Ovary (tissue), 10 donors: ENCODE measurements at regions of chr1 and their contacts with region 1.

Region 1: GRCh38 chr1:183471743-183472487 is 384 bp upstream of the SMG7 start:
- DNase-seq: peak; percentile 98 to 99 (median 98)
- H3K4me3 ChIP-seq: peak overlapping the region; percentile 96
- H3K27ac ChIP-seq: peak overlapping the region; percentile 88 to 90
- H3K4me1 ChIP-seq: peaks cover 4% of the 10 kb centered on the region
- H3K27me3 ChIP-seq: no peaks in the 10 kb centered on the region
- CTCF ChIP-seq: peak in 2 of 3 donors; percentile 11 to 45
- EP300 ChIP-seq: no peak
- POLR2A ChIP-seq: peak; percentile 55

Region 2: DNA sequence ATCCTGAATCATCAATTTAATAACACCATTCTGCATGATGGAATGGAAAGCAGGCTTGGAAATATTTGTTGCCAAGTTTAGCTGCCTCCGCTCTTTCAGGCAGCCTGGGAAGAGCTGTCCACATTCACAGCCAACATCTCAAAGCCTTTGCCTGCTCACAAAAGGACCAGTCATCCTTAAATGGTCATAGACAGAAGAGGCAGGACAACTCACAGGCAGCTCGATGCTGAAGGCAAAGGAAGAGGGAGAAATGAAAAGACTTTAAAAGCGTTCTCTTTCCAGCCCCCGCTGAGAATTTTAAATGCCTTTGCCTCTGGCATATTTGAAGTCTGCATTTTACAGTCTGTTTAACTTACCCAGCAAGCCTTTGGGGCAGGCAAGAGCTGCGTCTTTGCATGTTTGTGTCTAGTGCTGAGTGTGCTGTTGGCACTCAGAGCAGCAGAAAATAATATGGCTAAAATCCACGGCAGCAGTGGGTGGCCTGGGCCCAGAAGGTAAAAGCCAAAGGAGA is 122.7 kb before region 1 on chr1:
- intact Hi-C with region 1: no loop called
- DNase-seq: no peak
- H3K4me3 ChIP-seq: no peak overlapping the region
- H3K27ac ChIP-seq: no peak overlapping the region
- H3K4me1 ChIP-seq: peaks cover 2% of the 10 kb centered on the region
- H3K27me3 ChIP-seq: no peaks in the 10 kb centered on the region
- CTCF ChIP-seq: no peak
- EP300 ChIP-seq: no peak
- POLR2A ChIP-seq: no peak

Region 3: DNA sequence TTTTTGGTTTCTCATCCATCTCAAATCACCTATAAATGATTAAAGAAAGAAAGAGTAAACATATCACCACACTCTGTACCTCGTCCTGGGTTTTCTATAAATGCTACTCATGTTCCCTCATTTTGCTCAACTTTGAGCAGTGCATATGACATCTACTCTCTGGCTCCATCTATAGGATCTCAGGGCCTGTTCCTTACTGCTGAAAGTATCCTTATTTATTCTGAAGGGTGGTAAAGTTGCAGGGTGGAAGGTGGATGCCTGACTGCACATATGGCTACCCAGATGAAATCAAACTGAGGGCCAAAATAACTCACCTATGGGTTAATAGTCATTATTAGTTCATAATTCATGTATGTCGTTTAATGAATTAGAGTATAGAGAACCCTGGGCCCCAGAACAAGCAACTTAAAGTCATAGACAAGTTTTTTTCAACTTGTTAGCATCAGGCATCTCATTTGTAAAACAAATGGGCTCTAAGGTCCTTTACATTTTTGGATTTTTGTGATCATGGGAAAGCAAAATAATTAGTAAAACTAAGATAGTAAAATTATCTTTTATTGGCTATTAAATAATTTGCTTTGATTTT is 71.8 kb after region 1 on chr1:
- intact Hi-C with region 1: loop called in 1 of 4 experiments (anchors 10 kb)
- DNase-seq: no peak
- H3K4me3 ChIP-seq: no peak overlapping the region
- H3K27ac ChIP-seq: no peak overlapping the region
- H3K4me1 ChIP-seq: no peaks in the 10 kb centered on the region
- H3K27me3 ChIP-seq: no peaks in the 10 kb centered on the region
- CTCF ChIP-seq: peak in 1 of 3 donors; percentile 21
- EP300 ChIP-seq: no peak
- POLR2A ChIP-seq: no peak

Region 4: GRCh38 chr1:183622884-183623785 is 151.2 kb after region 1 on chr1:
- intact Hi-C with region 1: loop called in 2 of 4 experiments (anchors 10 kb)
- DNase-seq: peak; percentile 37 to 66 (median 54)
- H3K4me3 ChIP-seq: no peak overlapping the region
- H3K27ac ChIP-seq: no peak overlapping the region
- H3K4me1 ChIP-seq: peaks cover 3% of the 10 kb centered on the region
- H3K27me3 ChIP-seq: no peaks in the 10 kb centered on the region
- CTCF ChIP-seq: peak; percentile 36 to 64 (median 50)
- EP300 ChIP-seq: no peak
- POLR2A ChIP-seq: no peak

Region 5: DNA sequence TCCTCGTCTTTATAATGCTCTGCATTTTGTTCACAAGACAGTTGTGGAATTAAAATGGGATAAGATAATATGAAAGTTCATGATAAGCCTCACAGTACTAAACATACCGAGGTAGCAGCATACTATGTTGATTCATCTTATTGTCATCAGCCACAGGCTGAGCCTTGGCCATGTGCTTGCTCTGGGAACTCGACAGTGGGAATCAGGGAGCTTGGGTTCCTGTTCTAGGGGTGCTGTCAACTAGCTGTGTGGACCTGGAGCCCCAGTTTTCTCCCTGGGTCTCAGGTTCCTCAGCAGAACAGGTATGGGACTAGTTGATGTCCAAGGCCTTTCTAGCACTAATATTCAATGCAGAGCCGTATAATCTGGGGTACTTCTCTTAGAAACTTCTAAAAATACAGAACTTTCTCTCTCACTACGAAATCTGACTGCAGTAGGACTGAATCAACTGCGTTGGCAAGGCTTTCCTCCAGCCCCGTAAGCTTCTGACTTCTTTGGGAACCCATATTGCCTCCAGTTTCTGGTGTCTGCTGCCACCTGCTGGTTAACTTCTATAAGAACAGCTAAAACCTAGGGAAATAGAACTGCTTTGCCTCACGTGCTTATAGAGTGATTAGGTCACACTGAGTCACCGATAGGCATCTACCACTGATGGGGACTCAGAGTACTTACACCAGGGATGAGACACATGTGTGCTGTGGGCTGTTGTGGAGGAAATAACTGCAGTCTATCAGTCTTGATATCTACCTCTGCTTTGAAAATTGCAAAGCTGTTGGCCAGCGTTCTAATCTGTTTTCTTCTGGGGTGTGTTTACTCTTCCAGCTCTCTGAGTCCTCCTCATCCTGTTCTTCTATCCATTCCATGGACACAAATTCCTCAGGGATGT is 444.0 kb after region 1 on chr1:
- intact Hi-C with region 1: loop called in 1 of 4 experiments (anchors 10 kb)
- DNase-seq: peak; percentile 71 to 84 (median 75)
- H3K4me3 ChIP-seq: no peak overlapping the region
- H3K27ac ChIP-seq: peak overlapping the region; percentile 5 to 66
- H3K4me1 ChIP-seq: peaks cover 2% of the 10 kb centered on the region
- H3K27me3 ChIP-seq: no peaks in the 10 kb centered on the region
- CTCF ChIP-seq: peak; percentile 79 to 95 (median 91)
- EP300 ChIP-seq: no peak
- POLR2A ChIP-seq: no peak